Naive thymus-derived CD4-positive, alpha-beta T cell (primary cell): ENCODE measurements at regions of chr4 and their contacts with region 1.

Region 1: GRCh38 chr4:17336524-17336961 is 175.3 kb downstream of the QDPR start:
- DNase-seq: peak; percentile 6 to 87 (median 77)
- ATAC-seq: peak; percentile 91
- H3K4me3 ChIP-seq: no peak overlapping the region
- H3K4me3 Mint-ChIP-seq: peak overlapping the region in 9 of 10 donors; percentile 36 to 73 (median 52)
- H3K27ac ChIP-seq: no peak overlapping the region
- H3K27ac Mint-ChIP-seq: peak overlapping the region; percentile 64 to 90 (median 85)
- H3K4me1 ChIP-seq: peaks cover 16 to 22% of the 10 kb centered on the region in 2 donors
- H3K4me1 Mint-ChIP-seq: peaks cover 13 to 40% (median 26%) of the 10 kb centered on the region in 7 donors
- H3K27me3 ChIP-seq: no peaks in the 10 kb centered on the region
- H3K27me3 Mint-ChIP-seq: peaks cover 0 to 12% (median 0%) of the 10 kb centered on the region in 5 donors

Region 2: GRCh38 chr4:15655229-15656037 is 1681.1 kb before region 1 on chr4 and contains the start of gene FBXL5:
- CTCF ChIA-PET with region 1: no interaction called
- POLR2A ChIA-PET with region 1: no interaction called
- intact Hi-C with region 1: loop called in 1 of 2 experiments (anchors 5 kb)
- DNase-seq: peak; percentile 77 to 92 (median 87)
- ATAC-seq: peak; percentile 92
- H3K4me3 ChIP-seq: peak within 1 kb of the TSS; percentile 87
- H3K4me3 Mint-ChIP-seq: peak within 1 kb of the TSS; percentile 94 to 100 (median 97)
- H3K27ac ChIP-seq: peak within 1 kb of the TSS; percentile 90
- H3K27ac Mint-ChIP-seq: peak within 1 kb of the TSS; percentile 90 to 98 (median 98)
- H3K4me1 ChIP-seq: peaks cover 29% of the 10 kb centered on the region in 2 donors
- H3K4me1 Mint-ChIP-seq: peaks cover 21 to 49% (median 45%) of the 10 kb centered on the region in 7 donors
- H3K27me3 ChIP-seq: no peaks in the 10 kb centered on the region
- H3K27me3 Mint-ChIP-seq: peaks cover 0 to 2% (median 0%) of the 10 kb centered on the region in 5 donors
- total RNA-seq, gene FBXL5: 39.1 to 107 (median 57.4) TPM

Region 3: GRCh38 chr4:17155486-17155885 is 181.1 kb before region 1 on chr4:
- CTCF ChIA-PET with region 1: no interaction called
- POLR2A ChIA-PET with region 1: no interaction called
- intact Hi-C with region 1: loop called in 1 of 2 experiments (anchors 1 kb)
- DNase-seq: no peak
- ATAC-seq: no peak
- H3K4me3 ChIP-seq: no peak overlapping the region
- H3K4me3 Mint-ChIP-seq: no peak overlapping the region
- H3K27ac ChIP-seq: no peak overlapping the region
- H3K27ac Mint-ChIP-seq: no peak overlapping the region
- H3K4me1 ChIP-seq: no peaks in the 10 kb centered on the region
- H3K4me1 Mint-ChIP-seq: peaks cover 0 to 8% (median 0%) of the 10 kb centered on the region in 7 donors
- H3K27me3 ChIP-seq: no peaks in the 10 kb centered on the region
- H3K27me3 Mint-ChIP-seq: peaks cover 2 to 12% (median 5%) of the 10 kb centered on the region in 5 donors

Region 4: GRCh38 chr4:17347445-17347844 is 10.9 kb after region 1 on chr4:
- CTCF ChIA-PET with region 1: interaction called, 4 read pairs
- POLR2A ChIA-PET with region 1: no interaction called
- intact Hi-C with region 1: loop called (anchors 1 kb)
- DNase-seq: peak in 6 of 9 donors; percentile 14 to 34 (median 20)
- ATAC-seq: peak; percentile 40
- H3K4me3 ChIP-seq: no peak overlapping the region
- H3K4me3 Mint-ChIP-seq: no peak overlapping the region
- H3K27ac ChIP-seq: no peak overlapping the region
- H3K27ac Mint-ChIP-seq: no peak overlapping the region
- H3K4me1 ChIP-seq: no peaks in the 10 kb centered on the region
- H3K4me1 Mint-ChIP-seq: no peaks in the 10 kb centered on the region
- H3K27me3 ChIP-seq: no peaks in the 10 kb centered on the region
- H3K27me3 Mint-ChIP-seq: peaks cover 0 to 6% (median 0%) of the 10 kb centered on the region in 5 donors

Region 5: GRCh38 chr4:17511950-17512795 is 175.6 kb after region 1 on chr4 and contains the start of gene QDPR:
- CTCF ChIA-PET with region 1: no interaction called
- POLR2A ChIA-PET with region 1: no interaction called
- intact Hi-C with region 1: loop called in 1 of 2 experiments (anchors 1 kb)
- DNase-seq: peak; percentile 55 to 81 (median 70)
- ATAC-seq: peak; percentile 95
- H3K4me3 ChIP-seq: peak within 1 kb of the TSS; percentile 94
- H3K4me3 Mint-ChIP-seq: peak within 1 kb of the TSS; percentile 86 to 100 (median 96)
- H3K27ac ChIP-seq: peak within 1 kb of the TSS; percentile 69
- H3K27ac Mint-ChIP-seq: peak within 1 kb of the TSS; percentile 83 to 96 (median 85)
- H3K4me1 ChIP-seq: peaks cover 9 to 10% of the 10 kb centered on the region in 2 donors
- H3K4me1 Mint-ChIP-seq: peaks cover 18 to 42% (median 34%) of the 10 kb centered on the region in 7 donors
- H3K27me3 ChIP-seq: no peaks in the 10 kb centered on the region
- H3K27me3 Mint-ChIP-seq: peaks cover 0 to 18% (median 6%) of the 10 kb centered on the region in 5 donors
- total RNA-seq, gene QDPR: 11.8 to 27.7 (median 23.1) TPM

Region 6: DNA sequence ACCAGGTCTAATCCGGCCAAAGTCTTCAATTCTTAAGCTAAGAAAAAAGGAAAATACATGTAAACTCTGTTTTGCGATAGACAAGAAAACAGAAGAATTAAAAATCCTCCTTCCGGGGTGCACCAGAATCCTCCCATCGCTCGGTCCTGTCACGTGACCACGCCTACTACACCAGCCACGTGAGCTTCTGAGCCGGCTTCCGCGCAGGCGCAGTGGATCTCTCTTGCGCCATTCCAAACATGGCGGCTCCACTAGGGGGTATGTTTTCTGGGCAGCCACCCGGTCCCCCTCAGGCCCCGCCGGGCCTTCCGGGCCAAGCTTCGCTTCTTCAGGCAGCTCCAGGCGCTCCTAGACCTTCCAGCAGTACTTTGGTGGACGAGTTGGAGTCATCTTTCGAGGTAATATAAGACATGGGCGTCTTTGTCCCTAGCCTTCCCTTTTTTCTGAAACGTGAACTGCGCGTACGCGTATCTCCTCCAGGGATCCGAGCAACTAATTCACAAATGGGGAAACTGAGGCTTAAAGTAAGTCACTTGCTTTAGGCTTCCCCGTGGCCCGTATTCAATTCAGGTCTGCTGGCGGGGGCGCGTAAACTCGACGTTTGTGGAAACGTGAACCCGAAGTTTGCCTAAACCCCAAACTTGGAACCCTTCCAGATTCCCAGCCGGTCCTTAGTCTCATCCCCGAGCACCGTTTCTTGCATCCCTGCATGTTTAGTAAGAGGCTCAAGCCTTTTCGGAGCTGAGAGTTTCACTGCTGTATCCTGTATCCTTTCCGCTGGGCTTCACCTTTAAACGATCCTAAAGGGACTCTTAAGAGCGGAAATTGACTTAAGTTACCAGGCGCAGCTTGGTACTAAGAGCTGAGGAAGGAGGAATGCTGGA is 278.1 kb after region 1 on chr4 and contains the start of gene MED28:
- CTCF ChIA-PET with region 1: no interaction called
- POLR2A ChIA-PET with region 1: no interaction called
- intact Hi-C with region 1: loop called in 1 of 2 experiments (anchors 1 kb)
- DNase-seq: peak; percentile 91 to 96 (median 94)
- ATAC-seq: peak; percentile 97
- H3K4me3 ChIP-seq: peak within 1 kb of the TSS; percentile 100
- H3K4me3 Mint-ChIP-seq: peak within 1 kb of the TSS; percentile 86 to 100 (median 96)
- H3K27ac ChIP-seq: peak within 1 kb of the TSS; percentile 94
- H3K27ac Mint-ChIP-seq: peak within 1 kb of the TSS; percentile 92 to 99 (median 97)
- H3K4me1 ChIP-seq: peaks cover 19 to 31% of the 10 kb centered on the region in 2 donors
- H3K4me1 Mint-ChIP-seq: peaks cover 23 to 58% (median 45%) of the 10 kb centered on the region in 7 donors
- H3K27me3 ChIP-seq: no peaks in the 10 kb centered on the region
- H3K27me3 Mint-ChIP-seq: no peaks in the 10 kb centered on the region
- total RNA-seq, gene MED28: 50.1 to 82.1 (median 55.7) TPM

Region 7: GRCh38 chr4:18021722-18022571 is 685.4 kb after region 1 on chr4 and contains the start of gene LCORL:
- CTCF ChIA-PET with region 1: no interaction called
- POLR2A ChIA-PET with region 1: no interaction called
- intact Hi-C with region 1: loop called (anchors 1 to 10 kb)
- DNase-seq: peak; percentile 66 to 87 (median 84)
- ATAC-seq: peak; percentile 88
- H3K4me3 ChIP-seq: peak within 1 kb of the TSS; percentile 94
- H3K4me3 Mint-ChIP-seq: peak within 1 kb of the TSS; percentile 91 to 98 (median 94)
- H3K27ac ChIP-seq: peak within 1 kb of the TSS; percentile 75
- H3K27ac Mint-ChIP-seq: peak within 1 kb of the TSS; percentile 80 to 92 (median 89)
- H3K4me1 ChIP-seq: peaks cover 0 to 9% of the 10 kb centered on the region in 2 donors
- H3K4me1 Mint-ChIP-seq: peaks cover 13 to 28% (median 18%) of the 10 kb centered on the region in 7 donors
- H3K27me3 ChIP-seq: no peaks in the 10 kb centered on the region
- H3K27me3 Mint-ChIP-seq: peaks cover 0 to 75% (median 6%) of the 10 kb centered on the region in 5 donors
- total RNA-seq, gene LCORL: 7.7 to 15.2 (median 13.1) TPM